ENCODE measurements at regions of chr2 and their contacts with region 1.

Region 1: DNA sequence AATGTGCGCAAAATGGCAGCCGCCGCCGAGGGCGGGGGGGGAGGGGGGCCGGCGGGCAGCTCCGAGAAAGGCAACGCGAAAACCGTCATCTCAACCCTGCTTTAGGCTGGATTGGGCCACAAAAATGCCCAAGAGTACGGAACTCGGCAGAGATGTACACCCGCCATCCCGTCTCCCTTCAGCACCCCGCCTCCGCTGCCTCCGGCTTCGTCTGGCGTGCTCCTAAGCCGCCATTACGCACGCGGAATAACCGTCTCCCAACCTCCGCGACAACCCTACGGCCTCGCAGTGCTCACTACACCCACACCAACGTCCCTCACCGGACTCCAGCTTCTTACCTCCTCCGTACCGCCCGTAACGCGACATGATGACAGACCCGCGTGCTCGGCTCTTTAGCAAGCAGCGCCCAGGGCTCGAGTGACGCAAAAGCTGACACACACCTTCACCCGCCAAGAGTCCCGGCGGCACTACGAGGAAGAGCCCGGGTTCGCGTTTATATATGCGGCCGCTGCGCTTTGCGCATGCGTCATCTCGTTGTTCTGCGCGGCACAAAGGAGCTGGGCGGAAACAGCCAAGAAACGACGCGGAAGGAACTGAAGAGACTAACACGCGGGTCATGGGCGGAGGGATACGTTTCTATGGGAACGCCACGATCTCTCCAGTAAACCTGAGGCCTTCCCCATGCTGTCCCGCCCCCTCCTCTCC is at the start of gene SRSF7:
- DNase-seq: peak; percentile 96
- CTCF ChIP-seq: no peak

Region 2: GRCh38 chr2:38535744-38536506 is 215.1 kb before region 1 on chr2:
- CTCF ChIA-PET with region 1: no interaction called
- POLR2A ChIA-PET with region 1: interaction called, 29 read pairs
- DNase-seq: peak; percentile 85
- CTCF ChIP-seq: peak; percentile 88

Region 3: DNA sequence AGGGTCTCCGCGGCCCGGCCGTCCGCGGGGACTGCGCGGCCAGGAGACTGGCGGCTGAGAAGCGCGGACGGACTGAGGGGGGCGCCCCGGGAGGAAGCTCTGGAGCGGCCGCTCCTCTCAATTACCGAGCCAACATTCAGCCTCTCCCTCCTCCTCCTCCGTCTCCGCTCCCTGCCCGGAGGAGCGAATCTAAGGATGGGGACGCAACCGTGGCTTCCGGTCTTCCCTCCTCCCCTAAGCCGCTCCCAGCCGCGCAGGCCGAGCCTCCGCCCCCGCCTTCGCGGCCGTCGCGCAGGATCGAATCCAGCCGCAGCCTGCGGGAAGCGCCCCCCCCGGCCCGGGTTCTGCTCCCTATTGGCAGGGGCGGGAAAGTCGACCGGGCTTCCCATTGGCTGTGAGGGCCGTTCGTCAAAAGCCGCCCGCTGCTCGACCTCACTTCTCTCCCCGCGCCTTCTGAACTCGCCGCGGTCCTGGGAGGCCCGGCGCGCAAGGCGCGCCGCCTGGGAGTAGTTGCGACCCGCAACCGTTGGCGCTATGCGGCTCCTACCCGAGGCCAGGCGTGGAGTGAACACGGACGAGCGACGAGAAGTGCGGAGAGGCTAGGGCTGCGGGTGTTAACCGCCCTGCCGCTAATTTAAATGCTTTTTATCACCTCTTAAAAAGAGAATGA is 148.2 kb before region 1 on chr2 and contains the start of gene HNRNPLL:
- CTCF ChIA-PET with region 1: no interaction called
- POLR2A ChIA-PET with region 1: interaction called, 22 read pairs
- DNase-seq: peak; percentile 98
- CTCF ChIP-seq: peak; percentile 20

Region 4: DNA sequence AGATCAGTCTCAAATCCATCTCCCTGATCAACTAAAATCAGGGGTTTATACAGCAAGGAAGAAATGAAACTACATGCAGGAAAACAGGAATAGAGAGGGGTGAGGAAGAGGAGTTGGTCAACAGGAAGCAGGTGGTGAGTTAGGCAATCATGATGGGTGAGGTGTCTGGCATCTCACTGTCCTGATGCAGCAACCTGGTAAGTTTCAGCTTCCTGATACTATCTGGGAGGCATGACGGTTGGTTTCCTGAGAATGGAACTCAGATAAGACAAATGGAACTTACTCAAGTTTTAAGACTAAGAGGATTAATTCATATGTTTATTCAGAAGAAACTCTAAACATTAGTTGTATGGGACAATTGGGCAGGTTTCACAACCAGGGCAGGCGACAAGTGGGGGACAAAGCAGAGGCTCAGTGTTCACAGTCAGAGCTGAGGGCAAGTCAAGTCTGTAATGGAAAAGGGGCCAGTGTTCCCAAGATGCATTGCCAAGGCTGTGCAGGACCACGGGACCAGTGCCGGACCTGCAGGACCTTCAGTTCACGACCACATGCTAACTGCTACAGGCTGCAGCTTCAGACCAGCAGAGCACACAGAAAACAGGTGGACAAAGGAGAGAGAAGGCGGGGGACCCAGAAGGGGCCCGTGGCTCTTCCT is 102.8 kb before region 1 on chr2:
- CTCF ChIA-PET with region 1: no interaction called
- POLR2A ChIA-PET with region 1: no interaction called
- DNase-seq: no peak
- CTCF ChIP-seq: no peak

Region 5: GRCh38 chr2:38720613-38721241 is 30.3 kb before region 1 on chr2:
- CTCF ChIA-PET with region 1: no interaction called
- POLR2A ChIA-PET with region 1: interaction called, 15 read pairs
- DNase-seq: no peak
- CTCF ChIP-seq: no peak

Region 6: DNA sequence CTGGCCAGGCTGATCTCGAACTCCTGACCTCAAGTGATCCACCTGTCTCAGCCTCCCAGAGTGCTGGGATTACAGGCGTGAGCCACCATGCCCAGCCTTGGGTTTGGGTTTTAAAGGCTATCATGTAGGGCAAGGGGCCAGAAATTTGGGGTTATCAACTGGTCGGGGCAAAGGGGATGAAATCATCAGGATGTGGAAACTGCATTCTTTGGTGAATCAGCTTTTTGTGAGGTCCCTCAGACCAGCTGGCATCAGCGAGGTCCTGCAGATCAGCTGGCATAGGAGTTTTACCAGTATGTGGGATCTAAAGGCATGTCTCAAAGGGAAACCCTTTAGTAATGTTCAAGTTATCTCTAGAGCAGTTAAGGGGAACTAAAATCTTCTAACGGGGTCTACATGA is 20.6 kb after region 1 on chr2:
- CTCF ChIA-PET with region 1: no interaction called
- POLR2A ChIA-PET with region 1: interaction called, 26 read pairs
- DNase-seq: no peak
- CTCF ChIP-seq: no peak

Region 7: DNA sequence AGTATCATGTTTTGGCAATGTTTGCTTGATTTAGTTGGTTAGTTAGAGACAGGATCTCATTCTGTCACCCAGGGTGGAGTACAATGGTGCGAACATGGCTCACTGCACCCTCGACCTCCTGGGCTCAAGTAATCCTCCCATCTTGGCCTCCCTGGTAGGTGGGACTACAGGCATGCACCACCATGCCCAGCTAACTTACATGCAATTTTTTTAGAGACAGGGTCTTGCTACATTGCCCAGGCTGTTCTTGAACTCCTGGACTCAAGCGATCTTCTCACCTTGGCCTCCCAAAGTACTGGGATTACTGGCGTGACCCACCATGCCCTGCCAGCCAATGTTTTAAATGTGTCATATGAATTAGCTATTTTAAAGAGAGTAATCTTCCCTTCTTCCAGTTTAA is 509.0 kb after region 1 on chr2:
- CTCF ChIA-PET with region 1: no interaction called
- POLR2A ChIA-PET with region 1: no interaction called
- DNase-seq: no peak
- CTCF ChIP-seq: no peak

Measured in GM10248 (cell line).